Sciatic nerve (tissue), 2 donors: ENCODE measurements at regions of chr3 and their contacts with region 1.

Region 1: GRCh38 chr3:123412811-123413604 is 35.9 kb downstream of the ADCY5 start:
- DNase-seq: no peak
- ATAC-seq: peak; percentile 86

Region 2: DNA sequence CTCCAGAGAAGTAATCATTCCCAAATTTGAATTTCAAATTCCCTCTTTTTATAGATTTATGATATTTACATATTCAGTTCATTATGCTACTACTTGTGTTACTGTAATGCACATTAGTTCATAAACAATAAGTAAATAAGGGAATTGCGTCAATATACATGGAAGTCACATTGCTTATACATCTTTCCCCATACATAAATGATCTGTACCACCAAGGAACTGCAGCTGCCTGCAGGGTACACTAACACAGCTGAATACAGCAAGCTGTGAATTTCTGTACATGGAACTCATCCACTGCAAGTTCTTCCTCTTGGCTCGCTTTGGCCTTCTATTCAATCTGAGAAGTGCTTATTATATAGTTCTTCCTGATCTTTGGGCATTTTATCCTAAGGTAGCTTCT is 1214.0 kb before region 1 on chr3:
- intact Hi-C with region 1: loop called (anchors 10 kb)
- DNase-seq: no peak
- ATAC-seq: no peak

Region 3: DNA sequence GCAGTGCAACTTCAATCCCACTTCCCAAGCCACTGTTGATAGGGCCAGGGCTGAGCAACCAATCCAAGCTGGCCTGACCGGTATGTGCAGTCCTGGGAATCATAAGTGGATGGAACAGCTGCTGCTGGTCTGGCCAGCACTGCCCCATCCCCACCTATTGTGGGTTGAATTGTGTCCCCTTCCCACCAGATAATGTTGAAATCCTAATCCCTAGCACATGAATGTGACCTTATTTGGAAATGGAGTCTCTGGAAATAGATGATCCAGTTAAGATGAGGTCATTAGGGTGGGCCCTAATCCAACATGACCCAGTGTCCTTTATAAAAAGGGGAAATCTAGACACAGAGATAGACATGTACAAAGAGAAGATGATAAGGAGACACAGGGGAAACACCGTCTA is 359.9 kb before region 1 on chr3:
- intact Hi-C with region 1: no loop called
- DNase-seq: no peak
- ATAC-seq: peak; percentile 70